Calu3 (cell line): ENCODE measurements at regions of chr9 and their contacts with region 1.

Region 1: DNA sequence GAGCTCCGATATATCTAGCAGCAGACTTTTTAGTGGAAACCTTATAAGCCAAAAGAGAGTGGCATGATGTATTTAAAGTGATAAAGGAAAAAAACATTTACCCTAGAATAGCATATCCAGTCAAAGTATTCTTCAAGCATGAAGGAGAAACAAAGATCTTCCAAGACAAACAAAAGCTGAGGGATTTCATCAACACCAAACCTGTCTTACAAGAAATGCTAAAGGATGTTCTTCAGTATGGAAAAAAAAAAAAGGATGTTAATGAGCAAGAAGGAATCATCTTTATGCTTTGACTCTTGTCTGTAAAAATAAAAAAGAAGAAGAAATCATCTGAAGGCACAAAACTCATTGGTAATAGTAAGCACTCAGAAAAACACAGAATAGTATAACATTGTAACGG is 338.2 kb downstream of the TLE1 start:
- DNase-seq: no peak
- H3K4me3 Mint-ChIP-seq: no peak overlapping the region
- H3K27ac Mint-ChIP-seq: no peak overlapping the region
- H3K4me1 Mint-ChIP-seq: no peaks in the 10 kb centered on the region
- H3K27me3 Mint-ChIP-seq: no peaks in the 10 kb centered on the region
- CTCF ChIP-seq: no peak

Region 2: GRCh38 chr9:81410197-81410596 is 59.0 kb after region 1 on chr9:
- CTCF ChIA-PET with region 1: no interaction called
- intact Hi-C with region 1: loop called (anchors 10 kb)
- DNase-seq: peak; percentile 19
- H3K4me3 Mint-ChIP-seq: no peak overlapping the region
- H3K27ac Mint-ChIP-seq: no peak overlapping the region
- H3K4me1 Mint-ChIP-seq: no peaks in the 10 kb centered on the region
- H3K27me3 Mint-ChIP-seq: no peaks in the 10 kb centered on the region
- CTCF ChIP-seq: no peak